ENCODE measurements at regions of chr15 and their contacts with region 1.

Region 1: GRCh38 chr15:81480645-81481053 is 106.6 kb upstream of the TMC3 start:
- DNase-seq: no peak
- ATAC-seq: peak; percentile 61 to 82 (median 76)
- H3K4me3 ChIP-seq: no peak overlapping the region
- H3K27ac ChIP-seq: no peak overlapping the region
- H3K4me1 ChIP-seq: no peaks in the 10 kb centered on the region
- H3K27me3 ChIP-seq: no peaks in the 10 kb centered on the region
- CTCF ChIP-seq: peak; percentile 84 to 94 (median 86)
- POLR2A ChIP-seq: no peak

Region 2: DNA sequence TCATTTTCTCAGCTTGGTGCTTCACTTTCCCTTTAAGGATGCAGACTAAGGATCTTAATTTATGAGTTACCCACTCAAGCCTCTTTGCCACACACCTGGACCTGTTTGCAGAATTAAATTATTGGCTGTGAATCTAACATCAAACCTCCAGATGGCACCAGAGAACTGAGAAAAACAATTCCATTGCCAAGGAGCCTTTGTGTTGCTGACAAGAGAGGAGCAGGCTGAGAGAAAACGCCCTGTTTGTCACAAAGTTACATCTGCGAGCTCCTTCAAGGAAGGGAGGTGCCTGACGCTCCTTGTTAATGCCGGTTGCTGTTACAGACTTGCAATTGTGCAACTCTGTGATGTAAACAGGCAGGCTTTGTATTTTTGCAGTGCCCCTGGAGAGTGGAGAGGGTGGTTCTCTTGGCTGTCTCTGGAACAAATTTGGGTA is 70.3 kb before region 1 on chr15:
- intact Hi-C with region 1: no loop called
- DNase-seq: no peak
- ATAC-seq: peak; percentile 43 to 84 (median 68)
- H3K4me3 ChIP-seq: no peak overlapping the region
- H3K27ac ChIP-seq: no peak overlapping the region
- H3K4me1 ChIP-seq: no peaks in the 10 kb centered on the region
- H3K27me3 ChIP-seq: no peaks in the 10 kb centered on the region
- CTCF ChIP-seq: peak; percentile 42 to 52 (median 45)
- POLR2A ChIP-seq: no peak

Region 3: DNA sequence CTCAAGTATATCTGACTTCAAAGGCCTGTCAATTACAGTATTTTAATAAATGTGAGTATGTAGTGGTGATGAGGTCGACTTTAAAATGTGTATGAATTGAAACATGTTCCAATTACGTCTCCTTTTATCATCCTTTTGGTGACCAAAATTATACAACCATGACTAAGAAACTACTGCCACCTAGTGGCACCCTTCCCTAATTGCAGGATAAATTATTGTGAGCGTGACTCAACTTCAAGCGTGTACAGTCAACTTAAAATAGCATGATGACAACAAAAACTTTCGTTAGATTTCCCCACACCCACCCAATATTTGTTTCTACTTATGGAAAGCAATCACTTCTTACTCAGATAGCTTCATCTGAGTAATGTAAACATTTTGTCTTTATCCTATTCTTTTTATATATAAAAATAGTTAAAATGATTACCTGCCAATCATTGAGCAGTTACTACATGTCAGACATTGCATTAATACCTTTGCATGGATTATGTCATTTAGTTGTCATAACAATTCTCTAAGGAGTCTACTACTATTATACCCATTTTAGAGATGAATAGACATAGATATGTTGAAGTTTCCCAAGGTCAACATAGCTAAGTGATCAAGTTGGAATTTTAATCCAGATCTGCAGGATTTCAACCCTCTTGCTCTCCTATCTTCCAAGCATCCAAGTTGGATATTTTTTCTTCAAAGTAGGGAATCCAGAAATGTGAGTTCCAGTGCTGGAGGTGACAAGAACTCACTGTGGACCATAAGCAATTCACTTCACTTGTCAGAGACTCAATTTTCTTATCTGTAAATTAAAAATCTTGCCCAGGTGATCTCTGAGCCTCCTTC is 459.2 kb after region 1 on chr15:
- intact Hi-C with region 1: loop called in 1 of 2 experiments (anchors 10 kb)
- DNase-seq: no peak
- ATAC-seq: peak in 2 of 4 donors; percentile 35 to 46
- H3K4me3 ChIP-seq: no peak overlapping the region
- H3K27ac ChIP-seq: no peak overlapping the region
- H3K4me1 ChIP-seq: no peaks in the 10 kb centered on the region
- H3K27me3 ChIP-seq: no peaks in the 10 kb centered on the region
- CTCF ChIP-seq: peak; percentile 63 to 86 (median 73)
- POLR2A ChIP-seq: no peak

Measured in right lobe of liver (tissue), 6 donors.